ENCODE measurements at regions of chr13 and their contacts with region 1.

Region 1: DNA sequence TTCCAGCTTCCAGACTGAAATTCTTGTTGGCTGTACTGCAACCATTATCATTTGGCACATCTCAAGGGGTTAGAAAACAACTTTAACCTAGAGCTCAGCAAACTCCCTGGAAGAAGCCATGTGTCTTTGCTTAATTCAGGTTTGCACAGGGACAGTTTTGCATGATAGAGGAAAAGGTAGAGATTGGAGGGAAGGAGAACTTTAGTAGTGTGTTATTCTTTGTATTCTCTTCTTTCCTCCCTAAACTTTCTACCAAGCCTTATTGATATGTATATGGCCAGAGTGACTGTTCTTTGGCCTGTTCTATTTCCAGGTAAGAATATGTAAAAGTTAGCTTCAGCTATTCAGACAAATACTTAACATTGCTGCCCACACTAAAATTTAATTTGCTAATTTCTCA is 53.1 kb downstream of the UGGT2 start:
- DNase-seq: no peak
- H3K4me3 ChIP-seq: no peak overlapping the region
- H3K27ac ChIP-seq: no peak overlapping the region
- H3K27me3 ChIP-seq: no peaks in the 10 kb centered on the region
- CTCF ChIP-seq: no peak

Region 2: GRCh38 chr13:95982144-95982543 is 17.9 kb before region 1 on chr13:
- CTCF ChIA-PET with region 1: interaction called, 12 read pairs
- POLR2A ChIA-PET with region 1: no interaction called
- DNase-seq: no peak
- H3K4me3 ChIP-seq: no peak overlapping the region
- H3K27ac ChIP-seq: no peak overlapping the region
- H3K27me3 ChIP-seq: no peaks in the 10 kb centered on the region
- CTCF ChIP-seq: no peak

Measured in AG04450 (cell line).